CD4-positive, alpha-beta T cell (primary cell): ENCODE measurements at regions of chr2 and their contacts with region 1.

Region 1: DNA sequence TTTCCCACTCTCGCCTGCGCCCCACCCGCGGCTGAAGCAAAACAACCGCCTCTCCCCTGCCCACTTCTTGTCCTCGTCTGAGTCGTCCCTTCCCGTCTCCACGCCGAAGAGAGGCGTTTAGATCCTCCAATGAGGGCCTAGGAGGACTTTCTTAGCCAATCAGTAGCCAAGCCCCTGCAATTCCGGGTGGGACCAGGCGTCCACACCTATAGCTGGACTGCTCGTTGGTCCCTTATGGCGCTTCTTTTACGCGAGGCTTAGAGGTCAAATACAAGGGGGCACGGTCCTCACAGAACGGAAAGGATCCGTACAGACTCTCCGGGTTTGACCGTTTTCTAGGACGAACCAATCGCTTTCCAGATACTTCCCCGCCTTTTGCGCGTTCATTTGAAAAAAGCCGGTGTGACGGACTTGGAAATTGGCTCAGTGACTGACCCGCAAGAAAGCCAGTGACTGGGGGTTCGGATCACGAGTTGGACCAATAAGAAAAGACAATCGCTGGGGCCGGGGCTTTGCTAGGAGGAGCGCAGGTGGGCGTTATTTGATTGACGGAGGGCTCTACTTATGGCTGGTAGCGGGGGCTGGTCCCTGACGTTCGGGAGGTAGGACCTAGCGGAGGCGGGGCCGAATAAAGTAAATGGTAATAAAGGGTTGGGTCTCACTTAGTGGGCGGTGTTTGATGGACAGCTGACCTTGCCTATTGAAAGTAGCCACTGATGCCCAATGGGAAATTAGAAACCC is 565 bp upstream of the PPM1B start:
- DNase-seq: peak in 13 of 14 experiments; percentile 91 to 100 (median 95)
- ATAC-seq: peak; percentile 78
- H3K4me3 ChIP-seq: peak overlapping the region; percentile 61
- H3K4me3 Mint-ChIP-seq: peak overlapping the region; percentile 99
- H3K27ac ChIP-seq: peak overlapping the region; percentile 98
- H3K27ac Mint-ChIP-seq: peak overlapping the region; percentile 99
- H3K4me1 ChIP-seq: peaks cover 20% of the 10 kb centered on the region
- H3K4me1 Mint-ChIP-seq: peaks cover 36% of the 10 kb centered on the region
- H3K27me3 ChIP-seq: no peaks in the 10 kb centered on the region
- H3K27me3 Mint-ChIP-seq: no peaks in the 10 kb centered on the region
- CTCF ChIP-seq: no peak

Region 2: GRCh38 chr2:43898134-43898837 is 269.8 kb before region 1 on chr2:
- CTCF ChIA-PET with region 1: no interaction called
- POLR2A ChIA-PET with region 1: no interaction called
- intact Hi-C with region 1: no loop called
- DNase-seq: peak in 1 of 14 experiments; percentile 8
- ATAC-seq: no peak
- H3K4me3 ChIP-seq: no peak overlapping the region
- H3K4me3 Mint-ChIP-seq: no peak overlapping the region
- H3K27ac ChIP-seq: no peak overlapping the region
- H3K27ac Mint-ChIP-seq: no peak overlapping the region
- H3K4me1 ChIP-seq: no peaks in the 10 kb centered on the region
- H3K4me1 Mint-ChIP-seq: no peaks in the 10 kb centered on the region
- H3K27me3 ChIP-seq: no peaks in the 10 kb centered on the region
- H3K27me3 Mint-ChIP-seq: no peaks in the 10 kb centered on the region
- CTCF ChIP-seq: no peak

Region 3: GRCh38 chr2:43995733-43996533 is 172.2 kb before region 1 on chr2 and contains the start of gene LRPPRC:
- CTCF ChIA-PET with region 1: no interaction called
- POLR2A ChIA-PET with region 1: interaction called, 6 read pairs
- intact Hi-C with region 1: loop called (anchors 5 kb)
- DNase-seq: peak; percentile 80 to 96 (median 85)
- ATAC-seq: peak; percentile 95
- H3K4me3 ChIP-seq: peak within 1 kb of the TSS; percentile 99
- H3K4me3 Mint-ChIP-seq: peak within 1 kb of the TSS; percentile 91
- H3K27ac ChIP-seq: peak within 1 kb of the TSS; percentile 74 to 91
- H3K27ac Mint-ChIP-seq: peak within 1 kb of the TSS; percentile 89
- H3K4me1 ChIP-seq: peaks cover 32% of the 10 kb centered on the region
- H3K4me1 Mint-ChIP-seq: peaks cover 47% of the 10 kb centered on the region
- H3K27me3 ChIP-seq: no peaks in the 10 kb centered on the region
- H3K27me3 Mint-ChIP-seq: peaks cover 6% of the 10 kb centered on the region
- CTCF ChIP-seq: no peak
- total RNA-seq, gene LRPPRC: 55.2 to 55.4 TPM

Region 4: GRCh38 chr2:44087036-44087713 is 80.9 kb before region 1 on chr2:
- CTCF ChIA-PET with region 1: no interaction called
- POLR2A ChIA-PET with region 1: no interaction called
- intact Hi-C with region 1: loop called (anchors 5 kb)
- DNase-seq: peak; percentile 68 to 90 (median 80)
- ATAC-seq: peak; percentile 94
- H3K4me3 ChIP-seq: peak overlapping the region; percentile 48
- H3K4me3 Mint-ChIP-seq: peak overlapping the region; percentile 87
- H3K27ac ChIP-seq: no peak overlapping the region
- H3K27ac Mint-ChIP-seq: peak overlapping the region; percentile 79
- H3K4me1 ChIP-seq: peaks cover 9% of the 10 kb centered on the region
- H3K4me1 Mint-ChIP-seq: peaks cover 11% of the 10 kb centered on the region
- H3K27me3 ChIP-seq: no peaks in the 10 kb centered on the region
- H3K27me3 Mint-ChIP-seq: no peaks in the 10 kb centered on the region
- CTCF ChIP-seq: peak; percentile 95

Region 5: GRCh38 chr2:44120428-44120827 is 47.7 kb before region 1 on chr2:
- CTCF ChIA-PET with region 1: no interaction called
- POLR2A ChIA-PET with region 1: no interaction called
- intact Hi-C with region 1: loop called (anchors 1 to 5 kb)
- DNase-seq: peak in 5 of 14 experiments; percentile 8 to 77 (median 52)
- ATAC-seq: peak; percentile 86
- H3K4me3 ChIP-seq: no peak overlapping the region
- H3K4me3 Mint-ChIP-seq: no peak overlapping the region
- H3K27ac ChIP-seq: no peak overlapping the region
- H3K27ac Mint-ChIP-seq: no peak overlapping the region
- H3K4me1 ChIP-seq: peaks cover 8% of the 10 kb centered on the region
- H3K4me1 Mint-ChIP-seq: peaks cover 12% of the 10 kb centered on the region
- H3K27me3 ChIP-seq: no peaks in the 10 kb centered on the region
- H3K27me3 Mint-ChIP-seq: no peaks in the 10 kb centered on the region
- CTCF ChIP-seq: no peak

Region 6: DNA sequence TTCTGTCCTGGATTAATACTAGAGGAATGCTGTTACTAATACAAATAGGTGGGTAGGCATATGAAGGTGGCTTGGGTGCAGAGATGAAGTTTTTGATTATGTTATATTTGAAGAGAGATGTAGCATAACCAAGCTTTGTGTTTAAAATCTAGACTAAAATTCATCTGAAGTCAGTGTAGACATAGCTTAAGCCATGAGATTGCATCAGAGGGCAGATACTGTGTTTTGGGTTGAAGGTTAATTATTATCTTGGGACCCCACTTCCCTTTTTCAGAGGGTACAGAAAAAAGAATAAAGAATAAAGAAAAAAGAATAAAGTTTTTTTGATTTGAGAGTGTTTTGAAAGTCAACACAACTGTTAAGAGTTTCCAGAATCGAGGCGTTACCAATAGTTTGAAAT is 13.5 kb after region 1 on chr2:
- CTCF ChIA-PET with region 1: no interaction called
- POLR2A ChIA-PET with region 1: interaction called, 5 read pairs
- intact Hi-C with region 1: loop called in 1 of 2 experiments (anchors 2 kb)
- DNase-seq: no peak
- ATAC-seq: no peak
- H3K4me3 ChIP-seq: no peak overlapping the region
- H3K4me3 Mint-ChIP-seq: peak overlapping the region; percentile 50
- H3K27ac ChIP-seq: no peak overlapping the region
- H3K27ac Mint-ChIP-seq: peak overlapping the region; percentile 12
- H3K4me1 ChIP-seq: peaks cover 37% of the 10 kb centered on the region
- H3K4me1 Mint-ChIP-seq: peaks cover 80% of the 10 kb centered on the region
- H3K27me3 ChIP-seq: no peaks in the 10 kb centered on the region
- H3K27me3 Mint-ChIP-seq: no peaks in the 10 kb centered on the region
- CTCF ChIP-seq: no peak

Region 7: GRCh38 chr2:44201648-44202165 is 33.6 kb after region 1 on chr2:
- CTCF ChIA-PET with region 1: no interaction called
- POLR2A ChIA-PET with region 1: interaction called, 3 read pairs
- intact Hi-C with region 1: loop called (anchors 5 kb)
- DNase-seq: no peak
- ATAC-seq: no peak
- H3K4me3 ChIP-seq: no peak overlapping the region
- H3K4me3 Mint-ChIP-seq: no peak overlapping the region
- H3K27ac ChIP-seq: no peak overlapping the region
- H3K27ac Mint-ChIP-seq: peak overlapping the region; percentile 5
- H3K4me1 ChIP-seq: peaks cover 10% of the 10 kb centered on the region
- H3K4me1 Mint-ChIP-seq: peaks cover 81% of the 10 kb centered on the region
- H3K27me3 ChIP-seq: no peaks in the 10 kb centered on the region
- H3K27me3 Mint-ChIP-seq: no peaks in the 10 kb centered on the region
- CTCF ChIP-seq: no peak

Region 8: DNA sequence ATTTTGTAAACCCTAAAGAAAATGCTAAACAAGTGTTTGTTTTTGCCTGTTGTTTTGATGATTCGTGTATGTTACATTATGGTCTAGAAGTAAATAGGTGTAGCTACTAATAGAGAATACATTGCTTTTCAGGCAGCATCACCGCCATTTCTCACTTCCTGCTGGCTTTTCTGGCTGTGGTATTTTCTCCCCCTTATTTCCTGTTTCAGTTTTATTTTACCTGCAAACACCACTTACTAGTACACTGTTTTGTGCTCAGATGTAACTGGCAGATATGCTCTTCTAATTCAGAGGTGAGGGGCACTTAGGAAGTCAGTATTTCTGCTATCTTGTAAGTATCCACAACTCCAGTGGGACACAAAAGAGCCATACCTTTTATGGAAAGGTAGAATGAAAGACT is 69.1 kb after region 1 on chr2:
- CTCF ChIA-PET with region 1: interaction called, 3 read pairs
- POLR2A ChIA-PET with region 1: interaction called, 18 read pairs
- intact Hi-C with region 1: loop called (anchors 5 kb)
- DNase-seq: peak in 9 of 14 experiments; percentile 5 to 77 (median 24)
- ATAC-seq: peak; percentile 90
- H3K4me3 ChIP-seq: peak overlapping the region; percentile 24
- H3K4me3 Mint-ChIP-seq: peak overlapping the region; percentile 16
- H3K27ac ChIP-seq: peak overlapping the region; percentile 8 to 59
- H3K27ac Mint-ChIP-seq: peak overlapping the region; percentile 82
- H3K4me1 ChIP-seq: peaks cover 15% of the 10 kb centered on the region
- H3K4me1 Mint-ChIP-seq: peaks cover 38% of the 10 kb centered on the region
- H3K27me3 ChIP-seq: no peaks in the 10 kb centered on the region
- H3K27me3 Mint-ChIP-seq: no peaks in the 10 kb centered on the region
- CTCF ChIP-seq: no peak